ENCODE measurements at regions of chr12 and their contacts with region 1.

Region 1: GRCh38 chr12:89709157-89709994 is 738 bp upstream of the ATP2B1 start:
- DNase-seq: peak; percentile 97 to 100 (median 99)
- H3K4me3 ChIP-seq: peak overlapping the region; percentile 81
- H3K4me3 Mint-ChIP-seq: peak overlapping the region; percentile 85 to 97 (median 94)
- H3K27ac ChIP-seq: peak overlapping the region; percentile 97
- H3K27ac Mint-ChIP-seq: peak overlapping the region; percentile 92 to 99 (median 97)
- H3K4me1 ChIP-seq: peaks cover 34% of the 10 kb centered on the region
- H3K4me1 Mint-ChIP-seq: peaks cover 37 to 53% (median 41%) of the 10 kb centered on the region in 3 donors
- H3K27me3 ChIP-seq: no peaks in the 10 kb centered on the region
- H3K27me3 Mint-ChIP-seq: peaks cover 0 to 8% of the 10 kb centered on the region in 2 donors

Region 2: DNA sequence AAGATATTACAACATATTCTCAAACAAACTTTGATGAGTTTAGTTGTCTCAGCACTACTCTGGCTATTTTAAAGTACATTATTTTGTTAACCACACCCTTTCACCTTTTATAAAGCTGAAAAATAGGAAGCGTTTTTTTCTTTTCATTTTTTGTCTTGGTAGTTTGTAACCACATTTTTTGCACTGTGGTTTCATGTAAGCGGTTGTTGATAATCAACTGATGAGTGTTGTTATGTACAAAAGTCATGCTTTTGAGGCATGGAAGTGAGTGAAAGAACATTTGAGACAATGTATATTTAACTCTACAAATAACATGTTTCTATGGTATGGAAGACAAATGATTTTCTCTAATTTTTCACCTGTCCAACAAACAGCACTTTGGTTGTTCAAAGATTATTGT is 51.4 kb after region 1 on chr12:
- CTCF ChIA-PET with region 1: no interaction called
- POLR2A ChIA-PET with region 1: interaction called, 11 read pairs
- DNase-seq: peak in 2 of 5 donors; percentile 14 to 68
- H3K4me3 ChIP-seq: no peak overlapping the region
- H3K4me3 Mint-ChIP-seq: peak overlapping the region; percentile 2 to 72 (median 46)
- H3K27ac ChIP-seq: no peak overlapping the region
- H3K27ac Mint-ChIP-seq: peak overlapping the region in 7 of 8 donors; percentile 39 to 90 (median 70)
- H3K4me1 ChIP-seq: peaks cover 30% of the 10 kb centered on the region
- H3K4me1 Mint-ChIP-seq: peaks cover 59 to 88% (median 86%) of the 10 kb centered on the region in 3 donors
- H3K27me3 ChIP-seq: no peaks in the 10 kb centered on the region
- H3K27me3 Mint-ChIP-seq: no peaks in the 10 kb centered on the region

Region 3: DNA sequence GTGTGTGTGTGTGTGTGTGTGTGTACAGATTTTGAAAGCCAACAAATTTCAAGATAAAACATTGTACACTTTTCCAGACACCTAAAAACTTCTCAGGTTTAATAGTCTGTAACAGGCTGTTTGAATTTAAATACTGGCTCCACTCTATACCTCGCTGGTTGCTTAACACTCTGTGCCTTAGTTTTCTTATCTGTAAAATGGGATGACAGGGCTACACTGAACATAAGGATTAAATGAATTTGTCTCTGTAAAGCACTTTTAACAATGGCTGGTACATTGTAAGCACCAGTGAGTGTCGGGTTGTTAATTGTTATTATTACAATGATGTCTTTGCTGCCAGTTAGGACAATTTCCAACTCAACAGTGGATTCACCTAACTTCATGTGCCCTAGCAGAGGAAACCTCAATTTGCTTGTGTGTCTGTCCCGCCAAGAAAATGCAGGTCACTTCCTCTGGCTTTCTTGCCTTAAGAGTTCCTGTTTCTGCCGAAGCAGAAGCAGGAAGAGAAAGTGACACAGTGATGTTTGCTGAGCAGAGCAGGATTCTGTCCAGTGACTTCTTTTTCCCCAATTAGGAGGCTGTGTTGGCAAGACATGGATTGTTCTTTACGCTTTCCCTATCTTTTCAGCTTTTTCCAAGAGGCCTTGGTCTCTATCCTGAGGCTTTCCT is 153.3 kb after region 1 on chr12:
- CTCF ChIA-PET with region 1: interaction called, 14 read pairs
- POLR2A ChIA-PET with region 1: interaction called, 34 read pairs
- DNase-seq: peak; percentile 13 to 67 (median 63)
- H3K4me3 ChIP-seq: peak overlapping the region; percentile 38
- H3K4me3 Mint-ChIP-seq: peak overlapping the region; percentile 70 to 89 (median 79)
- H3K27ac ChIP-seq: peak overlapping the region; percentile 78
- H3K27ac Mint-ChIP-seq: peak overlapping the region; percentile 90 to 100 (median 98)
- H3K4me1 ChIP-seq: peaks cover 34% of the 10 kb centered on the region
- H3K4me1 Mint-ChIP-seq: peaks cover 67 to 79% (median 74%) of the 10 kb centered on the region in 3 donors
- H3K27me3 ChIP-seq: no peaks in the 10 kb centered on the region
- H3K27me3 Mint-ChIP-seq: no peaks in the 10 kb centered on the region

Region 4: GRCh38 chr12:89947437-89948270 is 238.3 kb after region 1 on chr12:
- CTCF ChIA-PET with region 1: interaction called, 7 read pairs
- POLR2A ChIA-PET with region 1: interaction called, 10 read pairs
- DNase-seq: no peak
- H3K4me3 ChIP-seq: no peak overlapping the region
- H3K4me3 Mint-ChIP-seq: peak overlapping the region in 1 of 7 donors; percentile 5
- H3K27ac ChIP-seq: no peak overlapping the region
- H3K27ac Mint-ChIP-seq: peak overlapping the region; percentile 66 to 96 (median 88)
- H3K4me1 ChIP-seq: peaks cover 40% of the 10 kb centered on the region
- H3K4me1 Mint-ChIP-seq: peaks cover 58 to 88% (median 86%) of the 10 kb centered on the region in 3 donors
- H3K27me3 ChIP-seq: no peaks in the 10 kb centered on the region
- H3K27me3 Mint-ChIP-seq: no peaks in the 10 kb centered on the region